Transverse colon (tissue), 4 donors: ENCODE measurements at regions of chr10 and their contacts with region 1.

Region 1: DNA sequence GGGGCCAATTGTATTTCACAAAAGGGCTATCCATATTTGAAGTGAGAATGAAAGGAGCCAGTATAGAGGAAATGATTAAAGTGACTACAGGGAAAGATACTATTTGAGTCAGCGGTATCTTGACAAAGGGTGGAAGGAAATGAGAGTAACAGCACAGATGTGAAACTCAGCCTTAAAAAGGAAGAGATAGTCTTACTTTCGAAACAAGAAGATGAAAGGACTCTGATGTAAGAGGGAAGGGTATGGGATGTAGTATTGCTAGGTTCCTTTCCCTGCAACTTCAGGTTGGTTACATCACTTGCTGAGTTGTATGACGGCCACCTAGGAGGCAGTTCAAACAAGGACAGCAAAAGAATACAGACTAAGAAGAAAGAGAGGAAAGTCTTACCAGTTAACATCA is 13.7 kb downstream of the CISD1 start:
- DNase-seq: no peak
- H3K4me3 ChIP-seq: no peak overlapping the region
- H3K27ac ChIP-seq: no peak overlapping the region
- H3K4me1 ChIP-seq: peaks cover 0 to 18% (median 0%) of the 10 kb centered on the region in 4 donors
- H3K27me3 ChIP-seq: no peaks in the 10 kb centered on the region
- CTCF ChIP-seq: no peak
- EP300 ChIP-seq: no peak
- POLR2A ChIP-seq: no peak

Region 2: GRCh38 chr10:57621466-57621865 is 661.1 kb before region 1 on chr10:
- in situ Hi-C with region 1: no loop called
- intact Hi-C with region 1: no loop called
- DNase-seq: no peak
- H3K4me3 ChIP-seq: no peak overlapping the region
- H3K27ac ChIP-seq: no peak overlapping the region
- H3K4me1 ChIP-seq: no peaks in the 10 kb centered on the region
- H3K27me3 ChIP-seq: no peaks in the 10 kb centered on the region
- CTCF ChIP-seq: no peak
- EP300 ChIP-seq: no peak
- POLR2A ChIP-seq: no peak

Region 3: GRCh38 chr10:58070956-58071355 is 211.7 kb before region 1 on chr10:
- in situ Hi-C with region 1: no loop called
- intact Hi-C with region 1: no loop called
- DNase-seq: no peak
- H3K4me3 ChIP-seq: no peak overlapping the region
- H3K27ac ChIP-seq: no peak overlapping the region
- H3K4me1 ChIP-seq: no peaks in the 10 kb centered on the region
- H3K27me3 ChIP-seq: no peaks in the 10 kb centered on the region
- CTCF ChIP-seq: no peak
- EP300 ChIP-seq: no peak
- POLR2A ChIP-seq: no peak

Region 4: GRCh38 chr10:58177362-58177947 is 105.2 kb before region 1 on chr10:
- in situ Hi-C with region 1: loop called in 3 of 4 experiments (anchors 5 to 10 kb)
- intact Hi-C with region 1: no loop called
- DNase-seq: no peak
- H3K4me3 ChIP-seq: no peak overlapping the region
- H3K27ac ChIP-seq: no peak overlapping the region
- H3K4me1 ChIP-seq: no peaks in the 10 kb centered on the region
- H3K27me3 ChIP-seq: no peaks in the 10 kb centered on the region
- CTCF ChIP-seq: peak; percentile 56 to 68 (median 60)
- EP300 ChIP-seq: no peak
- POLR2A ChIP-seq: no peak

Region 5: DNA sequence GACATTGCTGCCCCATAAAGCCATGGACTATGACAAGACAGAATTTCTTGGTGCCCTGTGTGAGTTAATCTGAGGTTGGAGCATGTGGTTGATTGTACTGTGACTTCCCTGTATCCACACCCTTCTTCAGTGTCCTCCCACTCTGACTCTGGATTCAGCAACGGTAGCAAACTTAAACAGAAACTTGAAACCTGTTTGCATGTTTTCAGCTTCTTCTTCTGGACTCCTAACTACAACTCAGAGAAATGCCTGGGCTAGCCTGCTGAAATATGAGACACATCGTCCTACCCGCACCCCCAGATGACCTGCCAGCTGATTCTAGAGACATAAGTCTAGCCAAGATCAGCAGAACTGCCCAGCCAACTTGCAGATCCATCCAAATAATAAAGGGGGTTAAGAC is 93.3 kb before region 1 on chr10:
- in situ Hi-C with region 1: loop called in 3 of 4 experiments (anchors 5 to 10 kb)
- intact Hi-C with region 1: no loop called
- DNase-seq: no peak
- H3K4me3 ChIP-seq: no peak overlapping the region
- H3K27ac ChIP-seq: no peak overlapping the region
- H3K4me1 ChIP-seq: no peaks in the 10 kb centered on the region
- H3K27me3 ChIP-seq: no peaks in the 10 kb centered on the region
- CTCF ChIP-seq: no peak
- EP300 ChIP-seq: no peak
- POLR2A ChIP-seq: no peak

Region 6: GRCh38 chr10:58258977-58259692 is 23.5 kb before region 1 on chr10:
- in situ Hi-C with region 1: no loop called
- intact Hi-C with region 1: no loop called
- DNase-seq: no peak
- H3K4me3 ChIP-seq: no peak overlapping the region
- H3K27ac ChIP-seq: no peak overlapping the region
- H3K4me1 ChIP-seq: peaks cover 0 to 17% (median 2%) of the 10 kb centered on the region in 4 donors
- H3K27me3 ChIP-seq: no peaks in the 10 kb centered on the region
- CTCF ChIP-seq: peak in 1 of 5 experiments; percentile 7
- EP300 ChIP-seq: no peak
- POLR2A ChIP-seq: no peak